Panc1 (cell line): ENCODE measurements at regions of chr1 and their contacts with region 1.

Region 1: GRCh38 chr1:77697441-77697840 is 15.0 kb upstream of the ZZZ3 start:
- DNase-seq: no peak
- ATAC-seq: no peak
- H3K4me3 ChIP-seq: no peak overlapping the region
- H3K27ac ChIP-seq: no peak overlapping the region
- H3K4me1 ChIP-seq: no peaks in the 10 kb centered on the region
- H3K27me3 ChIP-seq: no peaks in the 10 kb centered on the region
- CTCF ChIP-seq: no peak

Region 2: GRCh38 chr1:77605246-77606026 is 92.0 kb before region 1 on chr1:
- CTCF ChIA-PET with region 1: no interaction called
- POLR2A ChIA-PET with region 1: no interaction called
- in situ Hi-C with region 1: no loop called
- intact Hi-C with region 1: no loop called
- DNase-seq: no peak
- ATAC-seq: peak; percentile 26; the same call in 1 of the 2 replicates
- H3K4me3 ChIP-seq: no peak overlapping the region
- H3K27ac ChIP-seq: no peak overlapping the region
- H3K4me1 ChIP-seq: no peaks in the 10 kb centered on the region
- H3K27me3 ChIP-seq: no peaks in the 10 kb centered on the region
- CTCF ChIP-seq: no peak

Region 3: GRCh38 chr1:77671836-77672235 is 25.6 kb before region 1 on chr1:
- CTCF ChIA-PET with region 1: no interaction called
- POLR2A ChIA-PET with region 1: no interaction called
- in situ Hi-C with region 1: no loop called
- intact Hi-C with region 1: no loop called
- DNase-seq: no peak
- ATAC-seq: peak; percentile 11; the same call in 1 of the 2 replicates
- H3K4me3 ChIP-seq: no peak overlapping the region
- H3K27ac ChIP-seq: no peak overlapping the region
- H3K4me1 ChIP-seq: peaks cover 27% of the 10 kb centered on the region
- H3K27me3 ChIP-seq: no peaks in the 10 kb centered on the region
- CTCF ChIP-seq: no peak

Region 4: GRCh38 chr1:77972080-77972479 is 274.6 kb after region 1 on chr1:
- CTCF ChIA-PET with region 1: no interaction called
- POLR2A ChIA-PET with region 1: interaction called, 13 read pairs
- in situ Hi-C with region 1: no loop called
- intact Hi-C with region 1: no loop called
- DNase-seq: no peak
- ATAC-seq: no peak
- H3K4me3 ChIP-seq: no peak overlapping the region
- H3K27ac ChIP-seq: no peak overlapping the region
- H3K4me1 ChIP-seq: peaks cover 14% of the 10 kb centered on the region
- H3K27me3 ChIP-seq: no peaks in the 10 kb centered on the region
- CTCF ChIP-seq: no peak